T-cell (primary cell): ENCODE measurements at regions of chr1 and their contacts with region 1.

Region 1: GRCh38 chr1:199762572-199762971 is 264.9 kb upstream of the NR5A2 start:
- DNase-seq: no peak
- ATAC-seq: no peak
- H3K4me3 ChIP-seq: no peak overlapping the region
- H3K4me3 Mint-ChIP-seq: no peak overlapping the region
- H3K27ac ChIP-seq: no peak overlapping the region
- H3K27ac Mint-ChIP-seq: no peak overlapping the region
- H3K4me1 ChIP-seq: no peaks in the 10 kb centered on the region
- H3K4me1 Mint-ChIP-seq: no peaks in the 10 kb centered on the region
- H3K27me3 ChIP-seq: no peaks in the 10 kb centered on the region
- H3K27me3 Mint-ChIP-seq: peaks cover 0 to 20% of the 10 kb centered on the region in 2 donors

Region 2: DNA sequence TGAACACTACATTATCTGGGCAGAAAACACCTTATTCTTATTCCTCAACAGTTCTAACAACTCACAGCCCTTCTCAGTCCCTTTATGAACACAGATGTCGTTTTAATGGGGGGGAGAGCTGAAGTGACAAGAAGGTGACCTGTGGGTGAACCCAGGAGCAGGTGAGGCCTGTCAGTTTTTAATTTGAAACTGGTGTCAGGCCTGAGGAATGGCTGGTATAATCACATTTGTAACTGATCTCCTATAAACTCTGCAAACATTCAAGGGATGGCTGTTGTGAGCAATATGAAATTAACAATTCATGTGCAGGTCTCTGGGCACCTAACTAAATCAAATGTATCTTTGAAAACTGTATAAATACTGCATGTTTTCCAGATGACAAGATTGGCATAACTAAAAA is 97.2 kb before region 1 on chr1:
- CTCF ChIA-PET with region 1: no interaction called
- POLR2A ChIA-PET with region 1: no interaction called
- DNase-seq: no peak
- ATAC-seq: no peak
- H3K4me3 ChIP-seq: no peak overlapping the region
- H3K4me3 Mint-ChIP-seq: no peak overlapping the region
- H3K27ac ChIP-seq: no peak overlapping the region
- H3K27ac Mint-ChIP-seq: no peak overlapping the region
- H3K4me1 ChIP-seq: no peaks in the 10 kb centered on the region
- H3K4me1 Mint-ChIP-seq: no peaks in the 10 kb centered on the region
- H3K27me3 ChIP-seq: peaks cover 0 to 3% of the 10 kb centered on the region in 2 experiments
- H3K27me3 Mint-ChIP-seq: peaks cover 11 to 16% of the 10 kb centered on the region in 2 donors

Region 3: DNA sequence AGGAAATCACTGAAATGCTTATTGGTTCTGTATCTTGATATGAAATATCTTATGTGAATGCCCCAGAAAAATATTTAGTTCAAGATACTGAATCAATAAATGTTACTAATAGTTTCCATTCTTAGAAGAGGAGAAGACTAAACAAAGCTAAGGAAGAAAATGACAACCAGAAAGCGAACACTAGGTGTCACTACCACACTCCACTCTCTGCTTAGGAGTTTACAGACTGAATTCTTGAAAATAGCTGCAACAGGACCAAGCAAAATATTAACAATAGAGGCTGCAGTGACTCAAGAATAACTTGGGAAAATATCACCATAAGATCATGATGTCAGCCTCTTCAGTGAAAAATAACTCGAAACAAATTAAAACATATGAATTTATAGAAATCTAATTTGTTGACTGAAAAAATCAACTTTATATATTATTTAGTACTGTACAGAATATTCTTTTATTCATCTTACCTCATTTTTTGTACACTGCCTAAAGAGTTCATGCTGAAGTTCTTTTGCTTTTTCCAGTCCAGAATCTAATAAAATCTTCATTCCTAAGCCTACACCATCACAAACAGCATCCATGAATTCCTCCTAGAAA is 796.4 kb after region 1 on chr1:
- CTCF ChIA-PET with region 1: interaction called in 1 of 2 experiments, 12 read pairs
- POLR2A ChIA-PET with region 1: no interaction called
- DNase-seq: peak in 4 of 35 experiments; percentile 2 to 56 (median 8)
- ATAC-seq: no peak
- H3K4me3 ChIP-seq: no peak overlapping the region
- H3K4me3 Mint-ChIP-seq: no peak overlapping the region
- H3K27ac ChIP-seq: no peak overlapping the region
- H3K27ac Mint-ChIP-seq: no peak overlapping the region
- H3K4me1 ChIP-seq: peaks cover 0 to 2% of the 10 kb centered on the region in 2 experiments
- H3K4me1 Mint-ChIP-seq: peaks cover 0 to 12% (median 2%) of the 10 kb centered on the region in 3 donors
- H3K27me3 ChIP-seq: no peaks in the 10 kb centered on the region
- H3K27me3 Mint-ChIP-seq: no peaks in the 10 kb centered on the region